ENCODE measurements at regions of chr2 and their contacts with region 1.

Region 1: GRCh38 chr2:219675221-219675620 is 47.8 kb downstream of the SLC4A3 start:
- DNase-seq: no peak
- ATAC-seq: no peak
- H3K4me3 ChIP-seq: no peak overlapping the region
- H3K27ac ChIP-seq: no peak overlapping the region
- H3K4me1 ChIP-seq: no peaks in the 10 kb centered on the region
- H3K27me3 ChIP-seq: no peaks in the 10 kb centered on the region
- CTCF ChIP-seq: no peak
- EP300 ChIP-seq: no peak
- POLR2A ChIP-seq: no peak
- RAD21 ChIP-seq: no peak

Region 2: GRCh38 chr2:219664944-219665343 is 10.3 kb before region 1 on chr2:
- CTCF ChIA-PET with region 1: no interaction called
- POLR2A ChIA-PET with region 1: interaction called, 10 read pairs
- in situ Hi-C with region 1: no loop called
- intact Hi-C with region 1: no loop called
- DNase-seq: peak in 1 of 4 experiments; percentile 54
- ATAC-seq: 0 out of 3 replicates have a peak, but pooled peaks have one; percentile 8
- H3K4me3 ChIP-seq: no peak overlapping the region
- H3K27ac ChIP-seq: peak overlapping the region; percentile 40; the same call in 1 of the 3 replicates
- H3K4me1 ChIP-seq: peaks cover 13 to 44% of the 10 kb centered on the region in 2 experiments; a peak in 4 of 5 replicates
- H3K27me3 ChIP-seq: no peaks in the 10 kb centered on the region
- CTCF ChIP-seq: no peak
- EP300 ChIP-seq: no peak
- POLR2A ChIP-seq: no peak
- RAD21 ChIP-seq: no peak

Measured in K562 (cell line).